ENCODE measurements at regions of chr4 and their contacts with region 1.

Region 1: DNA sequence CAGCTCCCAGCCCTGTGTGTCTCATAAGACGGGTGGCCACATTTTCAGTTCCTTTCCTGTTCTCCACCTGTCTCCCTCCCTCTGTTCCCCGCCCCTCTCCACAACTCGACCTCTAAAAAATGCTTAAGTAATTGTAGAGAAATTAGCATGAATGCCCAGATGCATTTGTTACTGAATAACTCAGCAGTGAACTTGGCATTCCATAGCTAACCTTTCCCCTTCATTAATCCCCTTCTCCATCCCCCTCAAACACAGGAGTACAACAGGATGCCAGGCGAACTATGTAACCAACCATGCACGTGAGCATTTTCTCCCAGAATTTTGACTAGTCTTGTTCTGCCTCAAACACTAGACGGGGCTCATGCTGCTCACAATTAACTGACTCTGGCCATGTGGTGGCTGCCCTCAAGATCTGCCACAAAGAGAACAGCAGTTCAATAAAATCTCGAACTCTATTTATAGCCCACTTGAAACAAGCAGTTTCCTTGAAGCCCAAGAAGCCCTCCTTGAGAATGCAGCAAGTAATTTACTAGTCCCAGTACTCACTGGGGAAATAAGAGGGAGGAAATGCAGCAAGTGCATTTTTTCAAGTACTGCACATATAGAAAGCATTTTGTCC is 351.2 kb downstream of the ARHGAP24 start:
- DNase-seq: peak; percentile 26
- ATAC-seq: no peak; the same call in 1 of the 2 replicates
- H3K4me3 ChIP-seq: no peak overlapping the region
- H3K27ac ChIP-seq: peak overlapping the region; percentile 21; the same call in 1 of the 2 replicates
- H3K4me1 ChIP-seq: peaks cover 34% of the 10 kb centered on the region
- H3K27me3 ChIP-seq: no peaks in the 10 kb centered on the region
- CTCF ChIP-seq: peak; percentile 44

Region 2: DNA sequence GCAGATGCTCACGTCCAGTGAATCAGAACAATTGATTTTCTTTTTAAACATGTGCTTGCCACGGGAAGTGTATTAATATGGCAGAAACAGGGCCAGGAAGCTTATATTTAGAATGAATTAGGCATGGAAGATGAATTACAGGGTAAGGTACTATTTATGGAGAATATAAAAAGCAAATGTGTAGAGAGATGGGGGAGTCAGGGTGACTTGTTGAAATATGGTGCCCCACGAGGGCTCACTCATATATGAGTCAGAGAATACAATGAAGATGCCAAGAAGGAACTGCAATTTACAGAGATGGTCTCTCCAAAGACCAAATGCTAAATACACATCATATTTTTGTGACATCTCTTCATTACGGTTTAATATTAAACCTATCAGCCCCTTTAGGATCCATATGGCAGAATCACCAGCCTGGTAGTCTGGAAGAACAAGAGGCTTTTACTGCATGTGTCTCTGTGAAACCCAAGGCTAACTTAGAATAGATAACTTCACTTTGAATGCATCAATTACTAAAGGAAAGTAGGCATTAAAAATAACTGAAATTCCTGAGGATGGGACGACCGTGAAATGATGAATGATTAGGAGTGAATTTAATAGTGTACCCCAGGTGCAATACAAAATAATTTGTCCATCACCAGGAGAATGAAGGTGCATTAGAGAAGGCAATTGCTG is 34.0 kb after region 1 on chr4:
- CTCF ChIA-PET with region 1: no interaction called
- POLR2A ChIA-PET with region 1: interaction called, 4 read pairs
- intact Hi-C with region 1: loop called (anchors 5 kb)
- DNase-seq: peak; percentile 56
- ATAC-seq: peak; percentile 91
- H3K4me3 ChIP-seq: no peak overlapping the region
- H3K27ac ChIP-seq: peak overlapping the region; percentile 46
- H3K4me1 ChIP-seq: peaks cover 19% of the 10 kb centered on the region
- H3K27me3 ChIP-seq: no peaks in the 10 kb centered on the region
- CTCF ChIP-seq: no peak

Region 3: DNA sequence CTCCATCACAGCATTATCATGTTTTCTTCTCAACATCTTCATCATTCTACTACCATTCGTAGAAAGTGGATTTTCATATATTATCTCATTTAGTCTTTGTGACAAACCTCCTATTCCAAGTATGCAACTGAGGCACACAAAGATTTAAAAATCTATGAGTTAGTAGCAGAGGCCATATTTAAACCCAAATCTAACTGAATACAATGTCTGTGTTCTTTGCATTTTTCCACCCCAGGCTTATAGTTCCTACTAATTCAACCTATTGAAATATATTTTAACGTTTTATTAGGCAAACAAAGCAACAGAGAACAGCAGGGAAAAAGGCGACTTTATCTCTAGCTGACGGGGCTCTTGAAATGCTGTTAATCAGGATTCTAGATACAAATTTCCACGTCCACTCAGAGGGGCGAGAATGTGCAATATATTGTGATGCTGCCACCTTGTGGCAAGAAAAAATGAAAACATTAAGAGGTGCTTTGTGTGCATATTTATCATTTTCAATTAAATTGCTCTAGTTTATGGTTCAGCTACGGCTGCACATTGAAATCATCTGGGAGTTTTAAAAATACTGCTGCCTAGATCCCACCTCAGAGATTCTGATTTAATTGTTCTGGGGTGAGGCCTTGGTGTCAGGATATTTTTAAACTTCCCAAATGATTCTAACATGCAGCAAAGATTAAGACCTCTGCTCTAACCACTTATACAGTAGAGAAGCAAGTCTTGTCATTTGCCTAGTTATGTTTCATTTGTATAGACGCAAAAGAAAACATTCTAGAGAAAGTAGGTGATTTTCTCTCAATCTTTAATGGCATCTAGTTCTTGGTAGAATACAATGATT is 217.8 kb after region 1 on chr4:
- CTCF ChIA-PET with region 1: no interaction called
- POLR2A ChIA-PET with region 1: no interaction called
- intact Hi-C with region 1: loop called (anchors 10 kb)
- DNase-seq: peak; percentile 72
- ATAC-seq: peak; percentile 76
- H3K4me3 ChIP-seq: peak overlapping the region; percentile 22; the same call in 1 of the 2 replicates
- H3K27ac ChIP-seq: no peak overlapping the region
- H3K4me1 ChIP-seq: peaks cover 11% of the 10 kb centered on the region
- H3K27me3 ChIP-seq: no peaks in the 10 kb centered on the region
- CTCF ChIP-seq: peak; percentile 71

Measured in PC-3 (cell line).